Sciatic nerve (tissue), 2 donors: ENCODE measurements at regions of chr1 and their contacts with region 1.

Region 1: GRCh38 chr1:237146241-237146640 is 104.3 kb downstream of the RYR2 start:
- DNase-seq: no peak
- ATAC-seq: no peak

Region 2: GRCh38 chr1:237074371-237075102 is 71.7 kb before region 1 on chr1:
- intact Hi-C with region 1: loop called (anchors 5 kb)
- DNase-seq: no peak
- ATAC-seq: no peak